Posterior cingulate gyrus (tissue), 11 donors: ENCODE measurements at regions of chr19 and their contacts with region 1.

Region 1: DNA sequence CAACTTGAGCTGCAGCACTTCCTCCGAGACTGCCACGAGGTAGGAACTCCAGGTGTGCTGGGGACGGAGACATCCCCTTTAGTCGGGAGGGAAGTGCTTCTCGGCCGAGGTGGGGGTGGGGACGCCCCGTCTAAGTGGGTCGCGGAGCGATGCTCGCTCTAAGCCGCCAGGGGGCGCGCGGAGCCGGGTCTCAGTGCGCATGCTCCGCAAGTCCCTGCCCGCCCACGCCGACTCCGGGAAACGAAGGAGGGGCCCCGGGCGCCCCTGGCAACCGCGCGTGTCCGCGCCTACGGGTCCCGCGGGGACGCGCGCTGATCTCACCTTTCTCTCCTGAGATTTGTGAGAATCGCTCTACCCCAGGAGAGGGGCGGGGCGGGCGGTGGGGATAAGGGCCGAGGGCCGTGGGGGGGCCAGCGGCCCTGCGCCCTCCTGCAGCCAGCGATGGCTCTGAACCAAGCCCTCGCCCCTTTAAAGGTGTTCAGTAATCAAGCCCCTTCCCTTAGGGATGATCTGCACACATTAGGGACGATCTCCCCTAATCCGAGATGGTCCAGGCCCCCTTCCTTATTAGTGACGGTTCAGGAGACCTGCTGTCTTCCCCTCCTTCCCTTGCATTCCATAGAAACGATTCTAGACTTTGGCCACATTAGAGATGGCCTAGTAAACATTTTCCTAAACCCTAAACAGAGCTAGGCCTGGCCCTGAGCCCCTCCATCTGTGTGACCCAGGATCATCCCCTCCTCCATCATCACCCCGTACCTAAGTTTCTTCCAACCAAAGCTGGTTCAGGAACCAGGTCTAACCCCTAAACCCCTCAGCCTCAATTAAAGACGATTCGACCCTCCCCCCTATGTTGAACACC is 47.3 kb upstream of the SHKBP1 start:
- DNase-seq: peak; percentile 70 to 98 (median 86)

Region 2: GRCh38 chr19:40465557-40466150 is 63.7 kb before region 1 on chr19 and contains the start of gene BLVRB:
- intact Hi-C with region 1: loop called (anchors 5 kb)
- DNase-seq: peak; percentile 99 to 100 (median 100)

Region 3: GRCh38 chr19:40567040-40567749 is 37.9 kb after region 1 on chr19:
- intact Hi-C with region 1: loop called (anchors 5 kb)
- DNase-seq: peak in 3 of 10 donors; percentile 6 to 33 (median 30)

Region 4: GRCh38 chr19:40598121-40598917 is 69.0 kb after region 1 on chr19:
- intact Hi-C with region 1: loop called (anchors 2 kb)
- DNase-seq: peak; percentile 77 to 98 (median 90)